ENCODE measurements at regions of chr11 and their contacts with region 1.

Region 1: DNA sequence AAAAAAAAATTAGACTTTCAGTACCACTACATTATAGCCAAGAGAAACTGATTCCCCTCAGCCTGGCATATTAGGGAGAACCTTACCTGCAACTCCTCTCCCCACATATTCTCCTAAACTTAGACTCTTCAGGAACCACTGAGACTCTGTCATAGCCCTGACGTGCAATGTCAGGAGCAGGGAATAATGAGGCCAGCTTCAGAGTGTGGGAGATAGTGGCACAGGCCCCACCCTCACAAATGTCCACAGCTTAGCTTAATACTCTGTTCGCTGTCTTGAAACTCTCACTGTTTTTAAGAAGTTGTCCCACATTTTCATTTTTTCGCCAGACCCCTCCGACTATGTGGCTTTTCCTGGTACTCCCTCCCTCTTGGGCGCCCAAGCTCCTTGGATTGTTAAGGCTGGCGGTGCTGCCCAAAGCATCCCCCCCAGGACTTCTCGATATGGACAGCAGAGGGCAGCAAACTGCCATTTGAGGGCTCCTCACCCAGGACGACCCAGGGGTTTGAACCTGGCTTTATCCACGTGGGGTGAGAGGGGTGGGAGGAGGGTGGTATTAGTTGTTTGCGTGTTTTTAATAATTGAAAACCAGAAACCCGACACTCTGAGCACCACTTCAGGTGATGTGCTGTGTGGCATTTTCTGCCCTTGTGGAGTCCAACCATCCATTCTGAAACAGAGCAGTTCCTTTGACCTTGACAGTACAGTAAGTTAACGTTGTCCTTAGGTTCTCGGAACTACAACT is 45.2 kb upstream of the RASSF10 start:
- DNase-seq: peak; percentile 33 to 94 (median 74)

Region 2: GRCh38 chr11:12755510-12756453 is 208.2 kb before region 1 on chr11:
- intact Hi-C with region 1: no loop called
- DNase-seq: no peak

Region 3: GRCh38 chr11:13152736-13153533 is 189.0 kb after region 1 on chr11:
- intact Hi-C with region 1: loop called (anchors 1 kb)
- DNase-seq: peak in 1 of 10 donors; percentile 18

Region 4: GRCh38 chr11:13183094-13183825 is 219.3 kb after region 1 on chr11:
- intact Hi-C with region 1: loop called (anchors 1 kb)
- DNase-seq: peak in 2 of 10 donors; percentile 19 to 51

Region 5: DNA sequence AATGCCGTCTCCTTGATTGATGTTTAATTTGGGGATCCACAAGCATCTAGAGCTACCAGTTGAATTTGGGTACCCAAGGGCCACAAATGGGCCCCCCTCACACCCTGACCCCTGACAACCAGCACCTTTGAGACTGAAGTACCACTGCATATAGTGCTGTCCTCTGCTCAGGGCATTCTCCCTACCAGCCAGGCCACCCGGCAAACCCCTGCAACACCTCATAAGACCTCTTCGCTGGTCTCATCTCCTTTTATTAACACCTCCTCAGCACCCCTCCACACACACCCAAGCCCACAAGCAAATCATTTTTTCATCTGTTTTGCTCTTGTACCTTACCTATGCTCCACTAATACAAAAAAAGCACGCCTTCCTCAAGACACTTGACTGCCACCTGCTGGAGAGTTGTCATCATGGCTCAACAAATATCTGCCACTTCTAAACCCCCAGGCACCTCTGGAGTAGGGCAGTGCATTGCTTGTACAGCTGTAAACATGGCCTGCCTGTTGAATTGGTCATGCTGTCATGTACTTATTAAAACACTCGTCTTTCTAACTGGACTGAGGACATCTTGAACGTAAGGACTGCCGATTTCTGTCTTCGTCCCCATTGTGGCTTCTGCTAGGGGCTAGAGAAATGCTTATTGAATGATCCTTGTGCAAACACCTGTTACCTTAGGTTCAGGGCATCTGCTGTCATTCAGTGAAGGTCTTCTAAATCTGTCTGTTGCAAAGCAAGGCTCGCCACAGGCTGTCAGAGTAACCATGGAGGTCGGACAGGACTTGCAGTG is 380.2 kb after region 1 on chr11:
- intact Hi-C with region 1: loop called (anchors 5 kb)
- DNase-seq: peak in 5 of 10 donors; percentile 58 to 75 (median 67)

Measured in posterior cingulate gyrus (tissue), 11 donors.